Naive thymus-derived CD4-positive, alpha-beta T cell (primary cell): ENCODE measurements at regions of chr22 and their contacts with region 1.

Region 1: DNA sequence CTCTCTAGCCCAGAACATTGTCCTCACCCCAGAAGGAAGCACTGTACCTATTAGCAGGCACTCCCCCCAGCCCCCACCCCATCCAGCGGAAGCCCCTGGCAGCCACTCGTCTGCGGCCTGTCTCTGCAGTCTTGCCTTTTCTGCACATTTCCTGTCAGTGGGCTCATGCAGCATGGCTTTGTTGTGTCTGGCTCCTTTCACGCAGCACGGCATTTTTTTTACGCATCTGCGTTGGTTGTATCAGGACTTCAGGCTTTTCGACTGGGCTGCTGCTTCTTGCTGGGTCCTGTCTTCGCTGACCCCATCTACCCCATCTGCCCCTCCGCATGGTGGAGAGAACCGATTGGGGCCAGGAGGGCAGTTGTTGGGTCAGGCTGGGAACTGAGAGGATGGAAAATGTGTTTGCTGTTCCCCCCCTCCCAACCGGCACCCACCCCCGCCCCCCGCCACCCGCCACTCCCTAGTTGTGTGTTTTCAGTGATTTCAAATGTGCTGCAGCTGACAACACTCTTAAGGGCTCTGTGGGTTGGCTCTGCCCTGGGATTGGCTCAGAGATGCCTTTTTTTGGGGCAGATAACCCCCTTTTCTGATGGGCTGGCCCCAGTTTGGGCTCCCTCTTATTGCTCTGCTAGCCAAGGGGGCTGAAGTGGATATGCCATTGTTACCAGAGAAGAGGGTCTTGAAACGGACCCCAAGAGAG is 110.0 kb downstream of the KIAA1671 start:
- DNase-seq: peak; percentile 37 to 90 (median 88)
- ATAC-seq: peak; percentile 95
- H3K4me3 ChIP-seq: peak overlapping the region; percentile 44
- H3K4me3 Mint-ChIP-seq: peak overlapping the region; percentile 74 to 88 (median 83)
- H3K27ac ChIP-seq: peak overlapping the region; percentile 70
- H3K27ac Mint-ChIP-seq: peak overlapping the region; percentile 90 to 99 (median 97)
- H3K4me1 ChIP-seq: peaks cover 41 to 50% of the 10 kb centered on the region in 2 donors
- H3K4me1 Mint-ChIP-seq: peaks cover 43 to 73% (median 68%) of the 10 kb centered on the region in 7 donors
- H3K27me3 ChIP-seq: no peaks in the 10 kb centered on the region
- H3K27me3 Mint-ChIP-seq: no peaks in the 10 kb centered on the region

Region 2: DNA sequence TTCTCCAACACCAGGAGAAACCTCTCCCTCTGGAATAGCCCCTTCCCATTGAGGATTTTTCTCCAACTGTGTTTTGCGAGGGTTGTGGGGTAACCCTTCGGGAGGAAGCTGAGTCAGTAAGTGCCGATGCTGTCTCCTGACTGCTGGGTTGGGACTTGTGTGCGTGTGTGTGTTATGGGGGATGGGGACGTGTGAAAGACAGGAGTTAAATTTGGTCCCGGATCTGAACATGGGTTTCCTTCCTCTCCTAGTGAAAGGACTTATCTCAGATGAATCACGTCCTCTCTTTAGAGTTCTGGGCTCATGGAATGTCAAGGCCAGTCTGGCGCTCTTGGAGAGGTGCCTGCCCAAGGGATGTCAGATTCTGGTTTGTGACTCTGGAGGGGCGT is 76.7 kb before region 1 on chr22:
- CTCF ChIA-PET with region 1: no interaction called
- POLR2A ChIA-PET with region 1: no interaction called
- intact Hi-C with region 1: no loop called
- DNase-seq: no peak
- ATAC-seq: peak; percentile 16
- H3K4me3 ChIP-seq: no peak overlapping the region
- H3K4me3 Mint-ChIP-seq: peak overlapping the region in 1 of 10 donors; percentile 71
- H3K27ac ChIP-seq: no peak overlapping the region
- H3K27ac Mint-ChIP-seq: peak overlapping the region in 2 of 9 donors; percentile 13 to 60
- H3K4me1 ChIP-seq: peaks cover 0 to 4% of the 10 kb centered on the region in 2 donors
- H3K4me1 Mint-ChIP-seq: peaks cover 0 to 38% (median 4%) of the 10 kb centered on the region in 7 donors
- H3K27me3 ChIP-seq: no peaks in the 10 kb centered on the region
- H3K27me3 Mint-ChIP-seq: peaks cover 6 to 20% (median 18%) of the 10 kb centered on the region in 5 donors

Region 3: DNA sequence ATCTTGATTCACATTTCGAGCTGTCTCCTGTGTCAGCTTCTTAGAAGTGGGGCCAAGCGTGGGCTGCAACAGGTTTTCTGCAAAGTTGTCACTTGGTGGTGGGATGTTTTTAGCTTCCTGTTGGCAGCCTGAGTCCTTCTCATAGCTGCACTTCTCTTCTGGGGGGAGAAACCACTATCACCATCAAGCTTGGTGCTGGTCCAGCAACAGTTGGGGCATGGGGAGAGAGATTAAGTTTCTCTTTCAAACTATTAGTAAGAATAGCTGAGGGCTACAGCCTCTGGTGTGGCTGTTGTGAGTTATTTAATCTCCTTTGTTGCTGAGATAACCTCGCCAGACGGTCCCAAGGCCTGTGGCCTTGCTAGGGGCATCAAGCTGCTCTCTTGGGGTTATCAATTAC is 13.8 kb after region 1 on chr22:
- CTCF ChIA-PET with region 1: interaction called, 49 read pairs
- POLR2A ChIA-PET with region 1: interaction called, 61 read pairs
- intact Hi-C with region 1: loop called (anchors 1 kb)
- DNase-seq: peak in 1 of 9 donors; percentile 63
- ATAC-seq: peak; percentile 62
- H3K4me3 ChIP-seq: no peak overlapping the region
- H3K4me3 Mint-ChIP-seq: peak overlapping the region; percentile 1 to 79 (median 50)
- H3K27ac ChIP-seq: no peak overlapping the region
- H3K27ac Mint-ChIP-seq: peak overlapping the region; percentile 3 to 85 (median 48)
- H3K4me1 ChIP-seq: peaks cover 24 to 47% of the 10 kb centered on the region in 2 donors
- H3K4me1 Mint-ChIP-seq: peaks cover 36 to 72% (median 64%) of the 10 kb centered on the region in 7 donors
- H3K27me3 ChIP-seq: no peaks in the 10 kb centered on the region
- H3K27me3 Mint-ChIP-seq: no peaks in the 10 kb centered on the region

Region 4: DNA sequence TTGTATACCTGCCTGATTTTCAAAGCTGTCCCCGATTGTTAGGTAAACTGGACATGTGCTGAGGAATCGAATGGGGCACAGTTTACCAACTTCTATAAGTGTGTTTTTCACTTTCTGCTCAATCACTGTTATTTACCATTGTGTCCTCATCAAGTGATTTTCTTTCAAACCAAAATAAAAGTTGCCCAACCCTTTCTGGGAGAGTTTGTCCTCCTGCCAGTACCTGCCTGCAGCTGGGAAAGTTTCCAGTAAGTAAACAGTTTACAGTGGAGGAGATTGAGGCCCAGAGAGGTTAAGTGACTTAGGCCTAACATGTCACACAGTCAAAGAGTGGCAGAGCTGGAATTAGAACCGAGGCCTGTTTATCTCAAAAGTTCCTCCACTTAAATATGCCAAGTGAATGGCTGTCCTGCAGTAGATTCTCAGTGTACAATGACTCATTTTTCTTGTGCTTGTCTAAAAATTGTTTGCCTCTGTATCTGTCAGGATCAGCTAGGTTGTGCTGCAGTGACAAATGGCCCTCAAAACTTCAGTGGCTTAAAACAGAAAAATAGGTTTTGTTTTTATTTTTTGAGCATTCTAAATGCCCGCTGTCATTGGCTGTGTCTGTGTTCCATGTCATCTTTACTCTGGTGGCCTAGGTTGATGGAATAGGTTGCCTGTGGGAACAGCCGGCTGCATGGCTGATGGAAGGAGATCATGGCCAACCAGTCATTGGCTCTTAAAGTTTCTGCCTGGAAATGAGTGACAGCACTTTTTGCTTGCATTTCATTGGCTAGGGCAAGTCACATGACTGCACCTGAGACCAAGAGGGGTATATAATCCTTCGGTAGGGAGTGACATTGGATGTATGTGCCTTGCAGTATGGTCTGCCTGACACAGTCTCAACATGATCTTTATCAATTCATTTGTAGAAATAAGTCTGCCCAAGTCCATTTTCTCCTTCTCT is 75.3 kb after region 1 on chr22:
- CTCF ChIA-PET with region 1: no interaction called
- POLR2A ChIA-PET with region 1: no interaction called
- intact Hi-C with region 1: no loop called
- DNase-seq: no peak
- ATAC-seq: no peak
- H3K4me3 ChIP-seq: no peak overlapping the region
- H3K4me3 Mint-ChIP-seq: no peak overlapping the region
- H3K27ac ChIP-seq: no peak overlapping the region
- H3K27ac Mint-ChIP-seq: peak overlapping the region in 1 of 9 donors; percentile 5
- H3K4me1 ChIP-seq: no peaks in the 10 kb centered on the region
- H3K4me1 Mint-ChIP-seq: peaks cover 0 to 2% (median 0%) of the 10 kb centered on the region in 7 donors
- H3K27me3 ChIP-seq: no peaks in the 10 kb centered on the region
- H3K27me3 Mint-ChIP-seq: no peaks in the 10 kb centered on the region